ENCODE measurements at regions of chr3 and their contacts with region 1.

Region 1: GRCh38 chr3:98209244-98209643 is 42.7 kb downstream of the OR5H15 start:
- DNase-seq: no peak
- H3K4me3 ChIP-seq: no peak overlapping the region
- H3K27ac ChIP-seq: no peak overlapping the region
- H3K4me1 ChIP-seq: no peaks in the 10 kb centered on the region
- H3K27me3 ChIP-seq: no peaks in the 10 kb centered on the region
- CTCF ChIP-seq: no peak
- EP300 ChIP-seq: no peak
- POLR2A ChIP-seq: no peak

Region 2: DNA sequence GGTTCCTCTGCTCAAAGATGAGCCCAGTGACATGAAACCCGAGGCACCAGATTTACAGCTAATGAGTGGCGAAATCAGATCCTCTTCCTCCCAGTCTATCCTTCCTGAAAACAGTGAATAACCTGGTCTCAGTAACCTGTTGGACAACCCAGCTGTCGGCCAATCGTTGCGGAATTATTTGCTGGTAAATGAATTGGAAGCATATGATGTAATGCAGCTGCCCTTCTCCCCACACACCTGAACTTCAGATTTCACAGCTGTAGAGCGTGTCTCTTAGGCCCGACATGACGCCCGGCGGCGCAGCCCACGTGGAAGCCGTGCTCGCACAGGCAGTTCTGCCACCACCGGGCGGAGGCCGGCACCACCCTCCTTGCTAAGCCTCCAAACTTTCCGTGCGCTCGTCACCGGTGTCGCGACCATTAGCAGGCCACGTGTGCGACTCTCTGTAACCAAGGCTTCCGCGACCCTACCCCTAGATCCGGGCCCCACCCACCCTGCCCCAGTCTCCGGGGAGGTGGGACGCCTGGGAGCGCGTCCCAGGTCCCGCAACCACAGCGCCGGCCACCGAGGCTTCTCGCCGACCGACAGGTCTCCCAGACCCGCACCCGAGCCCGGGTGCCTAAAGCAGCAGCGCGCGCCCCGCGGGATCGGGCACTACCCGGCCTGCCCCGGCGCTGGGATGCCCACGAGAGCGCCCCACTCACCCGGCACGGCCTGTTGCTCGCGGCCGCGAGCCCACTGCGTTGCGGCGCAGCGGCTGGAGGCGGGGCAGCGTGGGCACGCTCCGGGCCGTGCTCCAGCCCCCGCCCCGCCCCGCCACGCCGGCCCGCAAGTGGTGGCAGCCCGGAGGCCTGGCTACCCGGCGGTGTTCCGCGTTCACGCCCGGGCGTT is 237.3 kb before region 1 on chr3 and contains the start of gene RIOX2:
- intact Hi-C with region 1: no loop called
- DNase-seq: peak; percentile 58 to 80 (median 72)
- H3K4me3 ChIP-seq: peak within 1 kb of the TSS; percentile 93
- H3K27ac ChIP-seq: peak within 1 kb of the TSS; percentile 76 to 90
- H3K4me1 ChIP-seq: no peaks in the 10 kb centered on the region
- H3K27me3 ChIP-seq: no peaks in the 10 kb centered on the region
- CTCF ChIP-seq: no peak
- EP300 ChIP-seq: no peak
- POLR2A ChIP-seq: peak; percentile 30
- total RNA-seq, gene RIOX2: 12.6 to 36.7 (median 23.0) TPM

Region 3: DNA sequence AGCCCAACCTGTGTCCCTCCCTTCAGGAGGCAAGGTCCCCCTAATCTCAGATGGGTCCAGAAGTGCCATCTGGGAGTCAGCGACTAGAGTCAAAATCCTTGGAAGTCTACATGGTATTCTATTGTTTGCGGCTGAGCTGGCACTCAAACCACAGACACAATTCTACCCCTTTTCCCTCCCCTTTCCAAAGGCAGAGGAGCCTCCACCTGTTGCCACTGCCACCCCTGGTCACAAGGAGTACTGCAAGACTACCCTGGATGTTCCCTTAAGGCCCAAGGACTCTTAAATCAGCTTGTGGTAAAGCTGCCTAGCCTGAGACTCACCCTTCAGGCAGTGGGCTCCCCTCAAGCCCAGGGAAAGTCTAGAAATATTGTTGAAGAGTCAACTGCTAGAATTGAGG is 50.5 kb after region 1 on chr3:
- intact Hi-C with region 1: loop called in 1 of 4 experiments (anchors 10 kb)
- DNase-seq: no peak
- H3K4me3 ChIP-seq: no peak overlapping the region
- H3K27ac ChIP-seq: no peak overlapping the region
- H3K4me1 ChIP-seq: no peaks in the 10 kb centered on the region
- H3K27me3 ChIP-seq: no peaks in the 10 kb centered on the region
- CTCF ChIP-seq: no peak
- EP300 ChIP-seq: no peak
- POLR2A ChIP-seq: no peak

Region 4: GRCh38 chr3:98980915-98981596 is 771.8 kb after region 1 on chr3:
- intact Hi-C with region 1: no loop called
- DNase-seq: no peak
- H3K4me3 ChIP-seq: no peak overlapping the region
- H3K27ac ChIP-seq: no peak overlapping the region
- H3K4me1 ChIP-seq: peaks cover 3% of the 10 kb centered on the region
- H3K27me3 ChIP-seq: no peaks in the 10 kb centered on the region
- CTCF ChIP-seq: no peak
- EP300 ChIP-seq: no peak
- POLR2A ChIP-seq: no peak